ENCODE measurements at regions of chr13 and their contacts with region 1.

Region 1: GRCh38 chr13:52097197-52097596 is 31.7 kb downstream of the NEK5 start:
- DNase-seq: no peak
- H3K4me3 ChIP-seq: no peak overlapping the region
- H3K27ac ChIP-seq: no peak overlapping the region
- H3K4me1 ChIP-seq: no peaks in the 10 kb centered on the region
- H3K27me3 ChIP-seq: no peaks in the 10 kb centered on the region
- CTCF ChIP-seq: no peak
- EP300 ChIP-seq: no peak
- POLR2A ChIP-seq: no peak

Region 2: DNA sequence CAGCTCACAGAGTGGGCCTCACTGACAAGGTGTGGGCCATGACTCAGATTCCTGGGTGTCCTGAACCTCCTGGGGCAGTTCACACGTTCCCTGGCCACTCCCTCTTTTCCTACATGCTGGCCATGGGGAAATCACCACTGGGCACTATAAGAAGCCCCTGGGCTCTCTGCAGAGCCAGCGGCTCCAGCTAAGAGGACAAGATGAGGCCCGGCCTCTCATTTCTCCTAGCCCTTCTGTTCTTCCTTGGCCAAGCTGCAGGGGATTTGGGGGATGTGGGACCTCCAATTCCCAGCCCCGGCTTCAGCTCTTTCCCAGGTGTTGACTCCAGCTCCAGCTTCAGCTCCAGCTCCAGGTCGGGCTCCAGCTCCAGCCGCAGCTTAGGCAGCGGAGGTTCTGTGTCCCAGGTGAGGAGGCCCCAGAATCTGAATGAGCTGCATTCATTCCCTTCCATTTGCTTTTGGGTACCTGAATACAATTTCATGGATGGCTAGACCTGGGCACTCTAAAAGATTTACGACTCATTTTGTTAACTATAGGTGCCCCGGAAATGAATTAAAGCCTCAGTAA is 931.5 kb after region 1 on chr13 and contains the start of gene OLFM4:
- in situ Hi-C with region 1: no loop called
- intact Hi-C with region 1: loop called (anchors 5 kb)
- DNase-seq: peak; percentile 51
- H3K4me3 ChIP-seq: peak within 1 kb of the TSS in 1 of 4 donors; percentile 7
- H3K27ac ChIP-seq: peak within 1 kb of the TSS in 3 of 4 donors; percentile 10 to 26 (median 17)
- H3K4me1 ChIP-seq: no peaks in the 10 kb centered on the region
- H3K27me3 ChIP-seq: no peaks in the 10 kb centered on the region
- CTCF ChIP-seq: no peak
- EP300 ChIP-seq: no peak
- POLR2A ChIP-seq: no peak
- total RNA-seq, gene OLFM4: 3.4 to 61.0 (median 51.9) TPM